Activated CD4-positive, alpha-beta memory T cell treated with anti-CD3 and anti-CD28 coated beads, Interleukin-2, amount 10 ng/mL, durations not matched to agents 7 days and 5 days (primary cell): ENCODE measurements at regions of chr22 and their contacts with region 1.

Region 1: DNA sequence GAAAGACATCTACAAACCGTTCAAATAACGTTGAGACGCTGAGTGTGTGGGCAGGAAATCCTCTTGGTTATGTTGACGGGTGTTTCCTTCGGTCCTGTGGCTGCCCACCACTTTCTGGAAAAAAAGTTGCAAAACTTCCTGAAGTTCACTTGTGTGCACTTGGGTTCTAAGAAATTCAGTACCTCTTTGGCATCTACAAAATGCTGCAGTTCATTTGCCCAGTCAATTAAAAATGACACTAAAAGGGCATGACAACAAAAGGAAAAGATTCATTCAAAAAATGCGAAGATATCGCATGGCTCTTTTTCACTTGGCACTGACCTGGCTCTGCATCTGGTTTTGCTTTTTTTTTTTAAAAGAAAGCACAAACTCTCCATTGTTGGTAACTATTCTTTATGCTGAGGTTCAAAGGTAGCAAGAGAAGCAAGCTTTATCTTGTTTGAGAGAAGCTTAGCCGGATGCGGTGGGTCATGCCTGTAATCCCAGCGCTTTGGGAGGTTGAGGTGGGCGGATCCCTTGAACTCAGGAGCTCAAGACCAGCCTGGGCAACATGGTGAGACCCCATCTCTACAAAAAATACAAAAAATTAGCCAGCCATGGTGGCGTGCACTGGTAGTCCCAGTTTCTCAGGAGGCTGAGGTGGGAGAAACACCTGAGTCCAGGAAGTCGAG is 10.6 kb upstream of the XBP1 start:
- DNase-seq: peak; percentile 75
- H3K4me3 Mint-ChIP-seq: peak overlapping the region; percentile 77
- H3K27ac Mint-ChIP-seq: peak overlapping the region; percentile 99
- H3K4me1 Mint-ChIP-seq: peaks cover 81% of the 10 kb centered on the region
- H3K27me3 Mint-ChIP-seq: no peaks in the 10 kb centered on the region

Region 2: DNA sequence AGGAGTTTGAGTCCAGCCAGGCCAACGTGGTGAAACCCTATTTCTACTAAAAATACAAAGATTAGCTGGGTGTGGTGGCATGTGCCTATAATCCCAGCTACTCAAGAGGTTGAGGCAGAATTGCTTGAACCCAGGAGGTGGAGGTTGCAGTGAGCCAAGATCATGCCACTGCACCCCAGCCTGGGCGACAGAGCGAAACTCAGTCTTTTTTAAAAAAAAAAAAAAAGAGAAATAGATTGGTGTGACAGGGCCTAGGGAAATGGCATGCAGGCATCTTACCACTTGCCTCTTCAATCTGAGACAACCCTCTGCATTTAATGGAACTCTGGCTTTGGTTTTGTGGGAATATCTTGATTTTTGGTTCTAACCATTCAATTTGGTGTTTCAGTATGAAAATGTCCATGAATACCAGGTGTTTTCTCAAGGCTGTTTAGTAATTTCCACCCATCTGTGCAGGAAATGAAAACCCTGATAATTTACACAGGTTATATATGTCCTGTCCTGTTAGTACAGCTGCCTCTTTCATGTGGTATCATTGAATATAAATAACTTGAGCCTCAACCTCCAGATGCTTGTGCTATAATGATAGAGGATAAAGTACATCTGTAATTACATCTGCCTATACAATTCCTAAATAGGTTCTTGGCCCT is 19.0 kb before region 1 on chr22:
- CTCF ChIA-PET with region 1: interaction called, 52 read pairs
- POLR2A ChIA-PET with region 1: interaction called, 360 read pairs
- DNase-seq: no peak
- H3K4me3 Mint-ChIP-seq: no peak overlapping the region
- H3K27ac Mint-ChIP-seq: peak overlapping the region; percentile 58
- H3K4me1 Mint-ChIP-seq: peaks cover 63% of the 10 kb centered on the region
- H3K27me3 Mint-ChIP-seq: no peaks in the 10 kb centered on the region

Region 3: GRCh38 chr22:28873183-28873963 is 62.4 kb after region 1 on chr22:
- CTCF ChIA-PET with region 1: no interaction called
- POLR2A ChIA-PET with region 1: no interaction called
- DNase-seq: no peak
- H3K4me3 Mint-ChIP-seq: no peak overlapping the region
- H3K27ac Mint-ChIP-seq: no peak overlapping the region
- H3K4me1 Mint-ChIP-seq: peaks cover 3% of the 10 kb centered on the region
- H3K27me3 Mint-ChIP-seq: no peaks in the 10 kb centered on the region